Thyroid gland (tissue), 4 donors: ENCODE measurements at regions of chr4 and their contacts with region 1.

Region 1: GRCh38 chr4:81069706-81070331 is 39.3 kb downstream of the BMP3 start:
- DNase-seq: peak; percentile 59 to 60
- H3K4me3 ChIP-seq: no peak overlapping the region
- H3K27ac ChIP-seq: no peak overlapping the region
- H3K4me1 ChIP-seq: no peaks in the 10 kb centered on the region
- H3K27me3 ChIP-seq: no peaks in the 10 kb centered on the region
- CTCF ChIP-seq: peak; percentile 52 to 91 (median 76)
- POLR2A ChIP-seq: no peak

Region 2: GRCh38 chr4:81351654-81352445 is 282.0 kb after region 1 on chr4:
- intact Hi-C with region 1: loop called (anchors 5 kb)
- DNase-seq: peak; percentile 64 to 75
- H3K4me3 ChIP-seq: no peak overlapping the region
- H3K27ac ChIP-seq: no peak overlapping the region
- H3K4me1 ChIP-seq: no peaks in the 10 kb centered on the region
- H3K27me3 ChIP-seq: no peaks in the 10 kb centered on the region
- CTCF ChIP-seq: peak; percentile 48 to 87 (median 58)
- POLR2A ChIP-seq: no peak